Panc1 (cell line): ENCODE measurements at regions of chr5 and their contacts with region 1.

Region 1: GRCh38 chr5:96807075-96807654 is 580 bp downstream of the ERAP1 start:
- DNase-seq: no peak
- ATAC-seq: peak; percentile 74
- H3K4me3 ChIP-seq: peak overlapping the region; percentile 82 to 85
- H3K27ac ChIP-seq: peak overlapping the region; percentile 97
- H3K4me1 ChIP-seq: peaks cover 19% of the 10 kb centered on the region
- H3K27me3 ChIP-seq: no peaks in the 10 kb centered on the region
- CTCF ChIP-seq: no peak

Region 2: GRCh38 chr5:96629774-96630173 is 177.4 kb before region 1 on chr5:
- CTCF ChIA-PET with region 1: no interaction called
- POLR2A ChIA-PET with region 1: no interaction called
- in situ Hi-C with region 1: no loop called
- intact Hi-C with region 1: no loop called
- DNase-seq: peak; percentile 54
- ATAC-seq: peak; percentile 72
- H3K4me3 ChIP-seq: no peak overlapping the region
- H3K27ac ChIP-seq: no peak overlapping the region
- H3K4me1 ChIP-seq: no peaks in the 10 kb centered on the region
- H3K27me3 ChIP-seq: no peaks in the 10 kb centered on the region; the same call in 1 of the 2 replicates
- CTCF ChIP-seq: no peak

Region 3: DNA sequence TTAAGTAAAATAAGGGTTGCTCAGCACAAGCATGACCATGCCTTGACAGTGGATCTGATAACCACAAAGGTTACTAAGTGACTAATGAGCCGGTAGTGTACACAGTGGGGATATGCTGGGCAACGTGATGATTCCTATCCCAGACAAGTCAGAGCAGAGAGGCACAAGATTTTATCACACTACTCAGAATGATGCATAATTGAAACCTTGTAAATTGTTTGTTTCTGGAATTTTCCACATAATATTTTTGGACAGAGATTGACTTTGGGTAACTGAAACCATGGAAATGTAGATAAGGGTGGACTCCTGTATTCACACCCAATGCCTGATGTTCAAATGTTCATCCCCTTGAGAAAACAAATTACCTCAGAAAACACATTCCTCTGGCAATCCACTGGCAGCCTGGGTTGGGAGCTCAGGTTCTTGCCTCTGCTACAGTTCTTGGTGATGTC is 16.8 kb after region 1 on chr5:
- CTCF ChIA-PET with region 1: interaction called, 20 read pairs
- POLR2A ChIA-PET with region 1: interaction called, 3 read pairs
- in situ Hi-C with region 1: no loop called
- intact Hi-C with region 1: no loop called
- DNase-seq: no peak
- ATAC-seq: peak; percentile 84; the same call in 1 of the 2 replicates
- H3K4me3 ChIP-seq: no peak overlapping the region
- H3K27ac ChIP-seq: no peak overlapping the region
- H3K4me1 ChIP-seq: no peaks in the 10 kb centered on the region
- H3K27me3 ChIP-seq: peaks cover 15% of the 10 kb centered on the region
- CTCF ChIP-seq: no peak

Region 4: DNA sequence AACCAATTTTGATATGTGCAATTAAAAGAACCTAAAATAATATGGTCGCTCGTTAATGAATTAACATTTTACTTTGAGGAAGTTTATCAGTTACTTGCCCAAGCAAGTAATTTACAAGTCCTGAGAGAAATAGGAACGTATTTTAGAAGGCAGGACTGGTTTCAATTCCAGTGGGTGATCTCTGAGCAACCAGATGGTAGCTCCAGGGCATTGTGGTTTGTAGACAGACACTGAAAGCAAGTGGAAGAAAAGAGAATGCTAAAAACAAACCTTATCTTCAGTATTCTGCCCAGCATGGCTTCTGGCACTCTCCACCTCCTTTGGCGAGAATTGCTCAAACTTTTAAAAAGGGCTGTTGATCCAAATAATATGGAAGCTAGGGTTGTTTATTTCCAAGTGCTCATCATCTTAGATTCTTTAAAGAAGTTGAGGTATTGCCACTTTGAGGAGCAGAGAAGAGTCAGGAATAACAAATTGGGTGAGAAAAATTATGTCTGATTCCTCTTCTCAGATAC is 37.4 kb after region 1 on chr5:
- CTCF ChIA-PET with region 1: no interaction called
- POLR2A ChIA-PET with region 1: interaction called, 17 read pairs
- in situ Hi-C with region 1: no loop called
- intact Hi-C with region 1: no loop called
- DNase-seq: no peak
- ATAC-seq: no peak
- H3K4me3 ChIP-seq: no peak overlapping the region
- H3K27ac ChIP-seq: no peak overlapping the region
- H3K4me1 ChIP-seq: no peaks in the 10 kb centered on the region
- H3K27me3 ChIP-seq: no peaks in the 10 kb centered on the region; the same call in 1 of the 2 replicates
- CTCF ChIP-seq: no peak

Region 5: GRCh38 chr5:98296426-98296825 is 1489.3 kb after region 1 on chr5:
- CTCF ChIA-PET with region 1: no interaction called
- POLR2A ChIA-PET with region 1: no interaction called
- in situ Hi-C with region 1: no loop called
- intact Hi-C with region 1: no loop called
- DNase-seq: no peak
- ATAC-seq: no peak
- H3K4me3 ChIP-seq: no peak overlapping the region
- H3K27ac ChIP-seq: no peak overlapping the region
- H3K4me1 ChIP-seq: no peaks in the 10 kb centered on the region
- H3K27me3 ChIP-seq: no peaks in the 10 kb centered on the region
- CTCF ChIP-seq: no peak